ENCODE measurements at regions of chrX and their contacts with region 1.

Region 1: DNA sequence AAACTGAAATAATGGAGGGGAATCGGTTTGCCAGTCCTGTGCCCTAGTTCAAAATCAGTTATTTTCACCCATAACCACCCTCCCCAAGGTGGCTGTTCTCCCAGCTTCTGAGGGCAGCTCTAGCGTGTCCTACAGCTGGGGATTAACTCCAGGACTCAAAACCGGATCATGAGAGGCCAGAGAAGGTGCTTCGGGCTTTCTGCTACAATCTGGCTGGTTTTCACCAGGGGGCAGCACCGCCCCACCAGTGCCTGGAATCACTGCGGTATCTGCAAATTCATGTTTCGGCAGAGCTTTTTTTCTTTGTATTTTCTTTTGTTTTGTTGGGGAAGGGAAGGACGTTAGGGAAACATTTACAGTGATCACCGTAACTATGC is 28.4 kb downstream of the PDHA1 start:
- DNase-seq: peak; percentile 69
- ATAC-seq: peak; percentile 66
- H3K4me3 Mint-ChIP-seq: peak overlapping the region; percentile 68
- H3K27ac Mint-ChIP-seq: no peak overlapping the region
- H3K4me1 Mint-ChIP-seq: no peaks in the 10 kb centered on the region
- H3K27me3 Mint-ChIP-seq: peaks cover 5% of the 10 kb centered on the region
- CTCF ChIP-seq: peak; percentile 48; the same call in 1 of the 2 replicates

Region 2: DNA sequence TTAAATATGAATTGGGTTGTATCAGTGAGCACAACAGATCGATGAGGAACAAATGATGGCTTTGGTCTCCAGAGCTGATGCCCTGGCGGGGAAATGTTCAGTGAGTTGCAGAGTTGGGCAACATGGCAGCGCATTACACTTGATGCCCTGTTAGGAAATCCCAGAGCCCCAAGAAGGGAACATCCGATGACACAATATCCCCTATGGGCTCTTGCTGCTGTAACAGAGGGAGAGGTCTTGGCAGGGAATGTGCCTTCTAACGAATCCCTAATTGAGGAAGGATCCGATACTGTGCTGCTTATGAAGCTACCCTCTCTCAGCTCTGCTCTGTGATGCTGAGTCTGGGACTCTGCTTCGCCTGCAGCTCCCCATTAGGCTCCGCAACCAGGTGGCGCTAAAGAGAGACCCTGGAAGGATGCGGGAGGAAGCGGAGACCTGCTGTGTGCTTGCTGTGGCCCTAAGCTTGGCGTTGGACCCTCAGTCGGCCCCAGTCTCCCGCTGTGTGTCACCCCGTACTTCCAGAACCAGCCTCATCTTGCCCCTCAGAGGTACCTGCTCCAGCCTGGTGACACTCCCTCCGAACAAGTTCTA is 10.5 kb after region 1 on chrX:
- CTCF ChIA-PET with region 1: interaction called, 22 read pairs
- POLR2A ChIA-PET with region 1: no interaction called
- DNase-seq: peak; percentile 77
- ATAC-seq: peak; percentile 94
- H3K4me3 Mint-ChIP-seq: no peak overlapping the region
- H3K27ac Mint-ChIP-seq: no peak overlapping the region
- H3K4me1 Mint-ChIP-seq: no peaks in the 10 kb centered on the region
- H3K27me3 Mint-ChIP-seq: no peaks in the 10 kb centered on the region
- CTCF ChIP-seq: peak; percentile 32; the same call in 1 of the 2 replicates

Region 3: DNA sequence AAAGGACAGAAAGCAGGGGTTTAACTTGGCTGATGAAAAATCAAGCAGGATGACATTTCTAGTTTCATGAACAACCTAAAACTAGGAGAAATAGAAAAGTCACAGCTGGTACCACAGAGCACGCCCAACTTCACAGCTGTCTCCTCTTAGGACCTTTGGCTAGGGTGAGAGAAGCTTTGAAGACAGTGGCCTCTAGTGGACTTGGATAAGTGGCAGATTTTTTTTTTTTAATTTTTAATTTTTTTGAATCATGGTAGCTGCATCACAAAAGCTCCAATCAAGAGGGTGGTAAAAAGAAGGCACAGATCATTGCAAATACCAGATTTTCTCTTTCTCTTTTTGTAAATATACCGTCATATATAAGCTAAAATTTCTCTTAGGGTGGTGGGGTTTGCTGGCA is 163.3 kb after region 1 on chrX:
- CTCF ChIA-PET with region 1: interaction called, 26 read pairs
- POLR2A ChIA-PET with region 1: no interaction called
- DNase-seq: no peak
- ATAC-seq: no peak
- H3K4me3 Mint-ChIP-seq: no peak overlapping the region
- H3K27ac Mint-ChIP-seq: no peak overlapping the region
- H3K4me1 Mint-ChIP-seq: no peaks in the 10 kb centered on the region
- H3K27me3 Mint-ChIP-seq: no peaks in the 10 kb centered on the region
- CTCF ChIP-seq: no peak